ENCODE measurements at regions of chr20 and their contacts with region 1.

Region 1: DNA sequence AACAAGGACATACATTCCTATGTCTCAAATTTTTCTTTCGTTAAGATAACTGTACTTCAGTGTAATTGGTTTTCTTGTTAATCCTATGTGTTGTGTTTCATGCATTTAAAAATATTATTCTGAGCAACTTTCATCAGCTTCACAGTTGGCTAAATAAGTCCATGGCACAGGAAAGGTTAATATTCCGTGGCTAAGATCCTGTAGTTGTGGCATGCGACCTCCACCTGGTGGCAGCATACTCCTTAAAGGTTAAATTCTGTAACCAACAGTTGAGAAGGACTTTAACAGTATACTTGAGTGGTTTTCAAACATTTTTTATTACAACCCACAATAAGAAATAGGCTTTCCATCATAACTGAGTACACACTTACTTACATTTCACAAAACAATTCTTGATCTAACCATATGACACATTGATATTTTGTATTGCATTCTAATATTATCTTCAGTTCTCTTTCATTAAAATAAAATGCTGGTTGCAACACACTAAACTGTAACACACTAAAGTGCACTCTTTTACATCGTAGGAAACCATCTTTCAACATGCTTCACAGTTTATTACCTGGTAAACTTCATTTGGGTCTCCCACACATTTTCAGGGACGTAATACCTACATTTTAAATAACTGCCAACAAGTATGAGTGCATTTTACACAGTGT is 118.3 kb downstream of the SLX4IP start:
- DNase-seq: no peak

Region 2: GRCh38 chr20:10761232-10761631 is 207.8 kb after region 1 on chr20:
- intact Hi-C with region 1: no loop called
- DNase-seq: no peak

Region 3: DNA sequence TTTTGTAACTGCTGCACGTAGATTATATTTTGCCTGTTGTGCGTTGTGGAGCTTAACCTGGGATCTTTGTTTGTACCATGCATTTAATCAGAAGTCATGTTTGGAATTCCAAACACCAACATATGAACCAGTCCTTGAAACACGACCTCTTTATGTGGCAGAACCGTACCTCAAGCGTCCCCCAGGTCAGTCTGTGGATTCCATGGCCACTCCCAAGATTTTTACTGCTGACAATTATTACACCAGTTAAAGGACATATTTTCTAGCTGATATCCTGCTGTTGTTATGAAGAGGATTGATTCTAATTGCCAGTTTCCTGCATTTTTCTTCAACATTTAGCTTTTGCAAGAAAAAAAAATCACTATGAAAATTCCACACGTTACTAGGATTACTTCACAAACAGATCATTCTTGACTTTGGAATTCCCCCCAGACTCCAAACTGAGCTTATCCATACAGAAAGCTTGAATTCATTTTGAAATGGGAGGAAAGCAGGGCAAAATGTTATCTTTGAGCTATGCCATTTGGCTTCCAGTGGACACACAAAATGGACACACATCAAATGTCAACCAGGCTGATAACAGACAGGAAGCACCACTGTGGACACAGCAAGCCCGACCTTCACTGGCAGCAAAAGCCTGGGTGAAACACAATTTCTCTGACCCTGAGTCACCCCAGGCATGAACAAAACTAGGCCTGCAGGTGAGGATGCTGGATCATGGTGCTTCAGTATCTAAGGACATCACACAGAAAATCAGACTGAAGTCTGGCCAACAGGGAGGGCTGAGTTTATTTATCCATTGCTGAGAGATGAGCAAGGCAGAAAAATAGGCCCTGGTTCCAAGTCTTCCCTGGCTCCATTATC is 663.2 kb after region 1 on chr20:
- intact Hi-C with region 1: loop called (anchors 5 kb)
- DNase-seq: no peak